ENCODE measurements at regions of chr1 and their contacts with region 1.

Region 1: DNA sequence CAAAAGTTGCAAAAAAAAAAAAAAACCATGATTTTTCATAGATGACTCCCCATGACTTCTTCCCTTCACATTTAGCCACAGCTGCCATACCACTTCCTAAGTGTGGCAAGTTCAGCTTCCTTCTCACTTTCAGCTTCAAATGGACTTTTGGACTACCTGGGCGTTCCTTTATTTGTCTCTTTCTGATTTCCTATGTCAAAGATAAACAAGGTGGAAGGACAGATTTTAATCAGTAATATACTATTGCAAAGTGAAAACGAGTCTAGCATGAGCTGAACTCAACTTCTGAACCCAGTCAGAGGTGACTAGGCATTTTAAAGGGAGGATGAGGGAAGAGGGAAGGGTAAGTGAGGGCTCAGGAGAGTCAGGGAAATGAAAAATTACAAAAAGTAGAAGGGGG is 14.4 kb upstream of the SCCPDH start:
- DNase-seq: peak; percentile 94
- ATAC-seq: peak; percentile 85
- H3K4me3 ChIP-seq: no peak overlapping the region
- H3K27ac ChIP-seq: peak overlapping the region; percentile 82
- H3K4me1 ChIP-seq: peaks cover 63% of the 10 kb centered on the region
- H3K27me3 ChIP-seq: no peaks in the 10 kb centered on the region
- CTCF ChIP-seq: no peak
- EP300 ChIP-seq: peak in 1 of 2 experiments; percentile 80; a peak in 2 of 4 replicates
- POLR2A ChIP-seq: no peak
- RAD21 ChIP-seq: no peak

Region 2: GRCh38 chr1:246554201-246554600 is 155.6 kb before region 1 on chr1:
- CTCF ChIA-PET with region 1: no interaction called
- POLR2A ChIA-PET with region 1: no interaction called
- in situ Hi-C with region 1: no loop called
- intact Hi-C with region 1: no loop called
- DNase-seq: no peak
- ATAC-seq: no peak
- H3K4me3 ChIP-seq: no peak overlapping the region
- H3K27ac ChIP-seq: no peak overlapping the region
- H3K4me1 ChIP-seq: peaks cover 10% of the 10 kb centered on the region
- H3K27me3 ChIP-seq: no peaks in the 10 kb centered on the region
- CTCF ChIP-seq: no peak
- EP300 ChIP-seq: no peak
- POLR2A ChIP-seq: no peak
- RAD21 ChIP-seq: no peak

Region 3: DNA sequence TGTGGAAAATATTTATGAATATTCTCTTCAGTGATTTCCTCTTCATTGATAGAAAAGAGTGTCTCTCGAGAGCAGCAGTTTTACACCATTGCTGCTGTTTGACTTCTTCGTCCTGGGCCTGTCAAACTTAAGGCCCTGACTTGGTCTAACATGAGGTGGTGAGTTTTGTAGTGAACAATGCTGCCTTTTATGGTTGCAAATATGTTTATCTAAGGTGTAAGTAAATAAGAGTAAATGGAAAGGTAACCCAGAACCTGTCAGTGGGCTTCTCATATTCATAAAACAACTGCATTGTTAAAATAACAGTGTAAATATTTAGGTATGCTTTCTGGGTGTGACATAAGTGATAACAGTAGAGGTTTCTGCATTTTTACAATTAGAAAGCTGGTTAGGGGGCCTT is 48.4 kb before region 1 on chr1:
- CTCF ChIA-PET with region 1: no interaction called
- POLR2A ChIA-PET with region 1: no interaction called
- in situ Hi-C with region 1: no loop called
- intact Hi-C with region 1: no loop called
- DNase-seq: no peak
- ATAC-seq: no peak
- H3K4me3 ChIP-seq: no peak overlapping the region
- H3K27ac ChIP-seq: no peak overlapping the region
- H3K4me1 ChIP-seq: no peaks in the 10 kb centered on the region; the same call in 1 of the 2 replicates
- H3K27me3 ChIP-seq: no peaks in the 10 kb centered on the region
- CTCF ChIP-seq: no peak
- EP300 ChIP-seq: no peak
- POLR2A ChIP-seq: no peak
- RAD21 ChIP-seq: no peak

Region 4: DNA sequence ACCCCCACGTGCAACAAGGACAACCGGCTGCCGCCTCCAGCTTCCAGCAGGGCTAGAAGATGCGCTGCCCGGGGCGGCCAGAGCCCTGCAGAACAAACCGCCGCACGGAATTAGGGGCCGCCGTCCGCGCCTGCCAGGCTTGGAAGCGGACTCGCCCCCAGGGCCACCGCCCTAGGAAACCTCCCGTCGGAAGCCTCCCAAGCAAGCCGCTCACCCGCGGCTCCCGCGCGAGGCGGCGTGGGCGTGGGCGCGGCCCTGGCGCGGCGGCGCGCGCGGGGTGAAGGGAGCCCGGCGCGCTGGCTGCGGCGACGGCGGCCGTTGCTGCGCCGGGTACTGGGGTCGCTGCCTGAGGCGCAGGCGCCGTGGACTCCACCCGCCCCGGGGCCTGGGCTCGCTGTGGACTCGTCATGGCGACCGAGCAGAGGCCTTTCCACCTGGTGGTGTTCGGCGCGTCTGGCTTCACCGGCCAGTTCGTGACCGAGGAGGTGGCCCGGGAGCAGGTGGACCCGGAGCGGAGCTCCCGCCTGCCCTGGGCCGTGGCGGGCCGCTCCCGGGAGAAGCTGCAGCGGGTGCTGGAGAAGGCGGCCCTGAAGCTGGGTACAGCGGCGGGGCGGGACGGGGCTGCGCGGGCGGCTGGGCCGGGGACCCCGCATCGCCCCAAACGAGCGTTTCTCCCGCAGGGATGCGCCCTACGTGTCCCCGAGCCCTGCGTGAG is 14.3 kb after region 1 on chr1 and contains the start of gene SCCPDH:
- CTCF ChIA-PET with region 1: no interaction called
- POLR2A ChIA-PET with region 1: interaction called, 82 read pairs
- in situ Hi-C with region 1: no loop called
- intact Hi-C with region 1: no loop called
- DNase-seq: peak; percentile 39
- ATAC-seq: peak; percentile 95
- H3K4me3 ChIP-seq: peak within 1 kb of the TSS; percentile 73 to 89 (median 82)
- H3K27ac ChIP-seq: peak within 1 kb of the TSS; percentile 95
- H3K4me1 ChIP-seq: peaks cover 42% of the 10 kb centered on the region
- H3K27me3 ChIP-seq: no peaks in the 10 kb centered on the region
- CTCF ChIP-seq: 0 out of 2 replicates have a peak, but pooled peaks have one; percentile 3
- EP300 ChIP-seq: no peak
- POLR2A ChIP-seq: peak; percentile 69 to 74; a peak in 3 of 4 replicates
- RAD21 ChIP-seq: peak; percentile 54; the same call in 1 of the 2 replicates
- total RNA-seq, gene SCCPDH: 62.3 and 65.6 TPM in 2 replicates

Region 5: GRCh38 chr1:246742396-246742795 is 32.6 kb after region 1 on chr1:
- CTCF ChIA-PET with region 1: no interaction called
- POLR2A ChIA-PET with region 1: no interaction called
- in situ Hi-C with region 1: no loop called
- intact Hi-C with region 1: no loop called
- DNase-seq: no peak
- ATAC-seq: no peak
- H3K4me3 ChIP-seq: no peak overlapping the region
- H3K27ac ChIP-seq: no peak overlapping the region
- H3K4me1 ChIP-seq: no peaks in the 10 kb centered on the region
- H3K27me3 ChIP-seq: no peaks in the 10 kb centered on the region
- CTCF ChIP-seq: no peak
- EP300 ChIP-seq: no peak
- POLR2A ChIP-seq: no peak
- RAD21 ChIP-seq: no peak